ENCODE measurements at regions of chr1 and their contacts with region 1.

Region 1: DNA sequence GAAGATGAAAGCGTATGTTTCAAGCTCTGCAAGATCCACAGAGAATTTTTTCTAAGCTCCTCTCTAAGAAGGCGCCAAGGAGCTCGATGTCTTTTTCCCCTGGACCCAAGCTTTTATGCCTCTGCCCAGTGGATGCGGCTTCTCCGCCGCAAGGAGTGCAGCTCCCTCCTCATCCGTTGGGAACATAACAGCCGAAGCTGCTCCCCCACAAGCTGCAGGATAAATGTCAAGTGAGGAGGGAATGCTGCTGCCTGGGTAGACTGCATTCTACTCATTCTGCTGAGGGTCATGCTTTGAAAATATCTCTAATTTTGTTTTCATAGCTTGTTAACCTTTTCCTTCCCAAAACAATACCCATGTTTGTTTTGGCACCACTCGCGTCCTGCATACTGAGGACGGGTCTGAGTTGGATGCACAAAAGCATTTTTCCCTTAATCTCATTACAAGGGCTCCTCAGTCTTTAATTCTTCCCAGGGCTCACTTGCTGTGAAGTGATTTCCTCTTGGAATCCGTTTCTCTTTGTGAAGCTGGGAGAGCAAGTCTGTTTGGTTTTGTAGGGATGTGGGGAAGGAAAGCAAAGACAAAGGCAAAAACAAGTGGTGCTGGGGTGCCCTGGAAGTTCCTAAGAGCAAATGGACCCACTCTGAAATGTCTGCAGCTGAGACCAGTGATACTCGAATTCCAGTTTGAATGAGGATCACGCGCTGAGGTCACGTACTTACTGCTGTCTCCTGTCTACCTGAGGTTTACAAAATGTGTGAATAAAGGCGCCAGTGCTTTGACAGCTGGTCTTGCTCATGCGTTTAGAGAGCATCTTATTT is 134.0 kb upstream of the IRF2BP2 start:
- DNase-seq: no peak
- CTCF ChIP-seq: no peak

Region 2: GRCh38 chr1:234755449-234755863 is 11.5 kb after region 1 on chr1:
- CTCF ChIA-PET with region 1: interaction called, 24 read pairs
- POLR2A ChIA-PET with region 1: no interaction called
- DNase-seq: no peak
- CTCF ChIP-seq: no peak

Region 3: GRCh38 chr1:234851450-234852438 is 107.7 kb after region 1 on chr1:
- CTCF ChIA-PET with region 1: no interaction called
- POLR2A ChIA-PET with region 1: no interaction called
- DNase-seq: peak; percentile 38
- CTCF ChIP-seq: no peak

Measured in GM10248 (cell line).